CD4-positive, alpha-beta T cell (primary cell): ENCODE measurements at regions of chr5 and their contacts with region 1.

Region 1: DNA sequence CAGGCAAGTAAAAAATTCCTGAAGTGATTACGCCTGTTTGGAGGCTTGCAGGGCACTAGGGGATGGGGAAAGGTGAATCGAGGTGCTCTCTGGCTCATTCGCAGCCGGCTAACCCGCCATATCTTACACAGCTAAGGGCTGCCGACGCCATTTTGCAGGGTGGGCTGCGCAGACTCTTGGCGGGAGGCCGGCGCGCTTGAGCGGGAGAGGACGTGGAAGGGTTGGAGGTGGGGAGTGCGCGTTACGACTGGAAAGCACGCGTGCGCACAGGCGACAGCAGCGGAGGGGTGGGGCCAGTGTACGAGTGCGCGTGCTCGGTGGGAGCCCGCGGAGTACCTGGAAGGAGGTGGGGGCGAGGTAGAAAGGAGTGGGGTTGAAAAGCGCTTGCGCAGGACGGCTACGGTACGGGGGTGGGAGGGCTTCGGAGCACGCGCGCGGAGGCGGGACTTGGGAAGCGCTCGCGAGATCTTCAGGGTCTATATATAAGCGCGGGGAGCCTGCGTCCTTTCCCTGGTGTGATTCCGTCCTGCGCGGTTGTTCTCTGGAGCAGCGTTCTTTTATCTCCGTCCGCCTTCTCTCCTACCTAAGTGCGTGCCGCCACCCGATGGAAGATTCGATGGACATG is at the start of gene NPM1:
- DNase-seq: peak; percentile 93 to 100 (median 98)
- ATAC-seq: peak; percentile 85
- H3K4me3 ChIP-seq: peak within 1 kb of the TSS; percentile 79
- H3K4me3 Mint-ChIP-seq: peak within 1 kb of the TSS; percentile 97
- H3K27ac ChIP-seq: peak within 1 kb of the TSS; percentile 75 to 83
- H3K27ac Mint-ChIP-seq: peak within 1 kb of the TSS; percentile 96
- H3K4me1 ChIP-seq: peaks cover 40% of the 10 kb centered on the region
- H3K4me1 Mint-ChIP-seq: peaks cover 58% of the 10 kb centered on the region
- H3K27me3 ChIP-seq: no peaks in the 10 kb centered on the region
- H3K27me3 Mint-ChIP-seq: no peaks in the 10 kb centered on the region
- CTCF ChIP-seq: no peak
- total RNA-seq, gene NPM1: 1,243 to 1,379 TPM

Region 2: GRCh38 chr5:171409164-171410136 is 22.0 kb after region 1 on chr5:
- CTCF ChIA-PET with region 1: no interaction called
- POLR2A ChIA-PET with region 1: interaction called, 10 read pairs
- intact Hi-C with region 1: no loop called
- DNase-seq: no peak
- ATAC-seq: peak; percentile 23
- H3K4me3 ChIP-seq: no peak overlapping the region
- H3K4me3 Mint-ChIP-seq: no peak overlapping the region
- H3K27ac ChIP-seq: no peak overlapping the region
- H3K27ac Mint-ChIP-seq: peak overlapping the region; percentile 72
- H3K4me1 ChIP-seq: no peaks in the 10 kb centered on the region
- H3K4me1 Mint-ChIP-seq: peaks cover 48% of the 10 kb centered on the region
- H3K27me3 ChIP-seq: no peaks in the 10 kb centered on the region
- H3K27me3 Mint-ChIP-seq: no peaks in the 10 kb centered on the region
- CTCF ChIP-seq: no peak

Region 3: GRCh38 chr5:171418316-171418981 is 31.0 kb after region 1 on chr5:
- CTCF ChIA-PET with region 1: no interaction called
- POLR2A ChIA-PET with region 1: interaction called, 12 read pairs
- intact Hi-C with region 1: no loop called
- DNase-seq: peak in 12 of 14 experiments; percentile 15 to 67 (median 35)
- ATAC-seq: peak; percentile 54
- H3K4me3 ChIP-seq: peak overlapping the region; percentile 43
- H3K4me3 Mint-ChIP-seq: peak overlapping the region; percentile 80
- H3K27ac ChIP-seq: no peak overlapping the region
- H3K27ac Mint-ChIP-seq: no peak overlapping the region
- H3K4me1 ChIP-seq: peaks cover 22% of the 10 kb centered on the region
- H3K4me1 Mint-ChIP-seq: peaks cover 17% of the 10 kb centered on the region
- H3K27me3 ChIP-seq: peaks cover 16 to 24% of the 10 kb centered on the region in 2 experiments
- H3K27me3 Mint-ChIP-seq: peaks cover 30% of the 10 kb centered on the region
- CTCF ChIP-seq: peak; percentile 68

Region 4: GRCh38 chr5:172283020-172283861 is 895.8 kb after region 1 on chr5 and contains the start of gene UBTD2:
- CTCF ChIA-PET with region 1: no interaction called
- POLR2A ChIA-PET with region 1: interaction called, 3 read pairs
- intact Hi-C with region 1: loop called in 1 of 2 experiments (anchors 5 kb)
- DNase-seq: peak in 13 of 14 experiments; percentile 37 to 86 (median 70)
- ATAC-seq: peak; percentile 69
- H3K4me3 ChIP-seq: peak within 1 kb of the TSS; percentile 81
- H3K4me3 Mint-ChIP-seq: peak within 1 kb of the TSS; percentile 95
- H3K27ac ChIP-seq: no peak within 1 kb of the TSS
- H3K27ac Mint-ChIP-seq: peak within 1 kb of the TSS; percentile 68
- H3K4me1 ChIP-seq: peaks cover 14% of the 10 kb centered on the region
- H3K4me1 Mint-ChIP-seq: peaks cover 33% of the 10 kb centered on the region
- H3K27me3 ChIP-seq: no peaks in the 10 kb centered on the region
- H3K27me3 Mint-ChIP-seq: no peaks in the 10 kb centered on the region
- CTCF ChIP-seq: peak; percentile 68
- total RNA-seq, gene UBTD2: 0.66 to 1.1 TPM

Region 5: GRCh38 chr5:172764849-172765765 is 1377.7 kb after region 1 on chr5:
- CTCF ChIA-PET with region 1: no interaction called
- POLR2A ChIA-PET with region 1: no interaction called
- intact Hi-C with region 1: loop called in 1 of 2 experiments (anchors 5 kb)
- DNase-seq: peak; percentile 87 to 100 (median 94)
- ATAC-seq: peak; percentile 75
- H3K4me3 ChIP-seq: peak overlapping the region; percentile 44
- H3K4me3 Mint-ChIP-seq: peak overlapping the region; percentile 71
- H3K27ac ChIP-seq: peak overlapping the region; percentile 89
- H3K27ac Mint-ChIP-seq: peak overlapping the region; percentile 95
- H3K4me1 ChIP-seq: peaks cover 59% of the 10 kb centered on the region
- H3K4me1 Mint-ChIP-seq: peaks cover 55% of the 10 kb centered on the region
- H3K27me3 ChIP-seq: no peaks in the 10 kb centered on the region
- H3K27me3 Mint-ChIP-seq: no peaks in the 10 kb centered on the region
- CTCF ChIP-seq: no peak

Region 6: GRCh38 chr5:172833686-172834414 is 1446.4 kb after region 1 on chr5 and contains the start of gene ERGIC1:
- CTCF ChIA-PET with region 1: no interaction called
- POLR2A ChIA-PET with region 1: no interaction called
- intact Hi-C with region 1: loop called in 1 of 2 experiments (anchors 10 kb)
- DNase-seq: peak; percentile 17 to 83 (median 52)
- ATAC-seq: peak; percentile 66
- H3K4me3 ChIP-seq: peak within 1 kb of the TSS; percentile 83
- H3K4me3 Mint-ChIP-seq: peak within 1 kb of the TSS; percentile 95
- H3K27ac ChIP-seq: peak within 1 kb of the TSS; percentile 41 to 78
- H3K27ac Mint-ChIP-seq: peak within 1 kb of the TSS; percentile 88
- H3K4me1 ChIP-seq: peaks cover 49% of the 10 kb centered on the region
- H3K4me1 Mint-ChIP-seq: peaks cover 45% of the 10 kb centered on the region
- H3K27me3 ChIP-seq: no peaks in the 10 kb centered on the region
- H3K27me3 Mint-ChIP-seq: no peaks in the 10 kb centered on the region
- CTCF ChIP-seq: no peak
- total RNA-seq, gene ERGIC1: 51.0 to 52.4 TPM